Natural killer cell (primary cell): ENCODE measurements at regions of chr11 and their contacts with region 1.

Region 1: DNA sequence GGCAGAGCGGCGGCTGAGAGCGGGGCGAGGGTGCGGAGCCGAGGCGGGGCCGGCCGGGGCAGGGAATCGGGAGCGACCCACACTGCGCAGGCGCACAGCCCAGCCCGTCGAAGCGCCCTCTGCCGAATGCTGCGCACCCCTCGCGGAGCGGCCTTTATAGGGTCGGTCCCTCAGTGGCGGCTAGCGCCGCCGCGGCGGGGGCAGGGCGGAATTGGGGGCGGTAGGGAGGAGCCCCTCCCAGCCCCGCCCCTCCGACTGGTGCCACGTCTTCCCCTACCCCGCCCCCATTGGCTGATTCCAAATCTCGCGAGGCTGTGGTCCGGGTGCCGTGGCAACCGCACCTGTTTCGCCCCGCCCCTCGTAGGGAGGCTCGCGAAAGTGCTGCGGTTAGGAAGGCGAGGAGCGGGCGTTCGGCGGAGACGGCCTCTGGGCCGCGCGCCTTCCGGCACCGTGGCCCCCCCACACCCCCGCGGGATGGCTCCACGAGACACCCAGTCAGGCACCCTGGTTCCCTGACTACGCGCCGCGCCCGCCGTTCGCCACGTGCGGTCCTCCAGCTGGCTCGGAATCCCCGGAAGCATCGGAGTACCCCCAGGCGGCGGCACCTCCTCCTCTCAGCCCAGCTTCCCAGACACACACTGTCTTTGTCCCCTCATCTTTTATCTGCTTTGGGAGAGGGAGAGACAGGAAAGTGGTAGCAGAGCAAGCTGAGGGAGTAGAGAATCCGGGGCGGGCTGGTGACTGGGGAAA is at the start of gene EHD1:
- DNase-seq: peak; percentile 99 to 100
- ATAC-seq: peak; percentile 82 to 94 (median 83)
- H3K4me3 ChIP-seq: peak within 1 kb of the TSS; percentile 73
- H3K4me3 Mint-ChIP-seq: peak within 1 kb of the TSS; percentile 98
- H3K27ac ChIP-seq: peak within 1 kb of the TSS; percentile 96
- H3K27ac Mint-ChIP-seq: peak within 1 kb of the TSS; percentile 95
- H3K4me1 ChIP-seq: peaks cover 67% of the 10 kb centered on the region
- H3K4me1 Mint-ChIP-seq: peaks cover 52 to 69% of the 10 kb centered on the region in 2 donors
- H3K27me3 ChIP-seq: no peaks in the 10 kb centered on the region
- H3K27me3 Mint-ChIP-seq: no peaks in the 10 kb centered on the region
- CTCF ChIP-seq: peak; percentile 28
- total RNA-seq, gene EHD1: 218 to 246 (median 225) TPM

Region 2: DNA sequence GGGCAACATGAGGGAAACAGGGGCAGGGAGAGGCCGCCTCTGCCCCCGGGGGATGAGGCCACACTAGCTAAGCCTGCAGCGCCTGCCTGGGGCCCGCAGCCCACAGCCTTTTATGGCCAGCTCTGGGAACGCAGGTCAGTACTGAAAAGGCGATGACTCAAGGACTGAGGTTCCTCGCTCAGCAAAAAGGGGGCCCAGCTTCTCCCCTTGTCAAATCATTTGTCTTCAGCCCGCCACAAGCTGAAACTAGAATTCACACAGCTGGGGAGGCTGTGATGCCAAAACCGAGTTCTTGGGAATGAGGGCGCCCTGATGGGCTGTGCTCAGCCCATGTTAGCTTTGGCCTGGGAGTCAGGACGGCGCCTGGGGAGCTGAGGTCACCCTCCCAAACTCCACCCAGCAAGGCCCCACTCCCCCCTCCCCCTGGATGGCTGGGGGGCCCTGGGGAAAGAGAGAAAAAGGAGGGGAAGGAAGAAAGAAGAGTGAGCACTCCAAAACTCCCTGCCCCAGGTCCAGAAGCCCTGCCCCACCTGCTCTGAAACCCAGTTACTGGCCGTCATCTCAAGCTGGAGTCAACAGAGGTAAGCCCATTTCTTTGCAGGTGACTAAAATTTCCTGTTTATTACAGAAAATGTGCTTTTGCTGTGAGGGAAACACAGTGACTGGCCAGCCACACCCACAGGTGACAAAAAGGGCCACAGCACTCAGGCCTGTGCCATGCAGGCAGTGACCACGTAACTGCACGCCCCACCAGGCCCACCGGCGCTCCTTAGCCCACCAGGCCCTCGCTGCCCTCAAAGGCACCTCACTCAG is 14.0 kb before region 1 on chr11:
- intact Hi-C with region 1: loop called (anchors 1 kb)
- DNase-seq: peak in 1 of 2 donors; percentile 50
- ATAC-seq: peak; percentile 25 to 50 (median 25)
- H3K4me3 ChIP-seq: peak overlapping the region; percentile 10
- H3K4me3 Mint-ChIP-seq: peak overlapping the region; percentile 81
- H3K27ac ChIP-seq: peak overlapping the region; percentile 91
- H3K27ac Mint-ChIP-seq: peak overlapping the region; percentile 95 to 96
- H3K4me1 ChIP-seq: peaks cover 99% of the 10 kb centered on the region
- H3K4me1 Mint-ChIP-seq: peaks cover 65 to 85% of the 10 kb centered on the region in 2 donors
- H3K27me3 ChIP-seq: no peaks in the 10 kb centered on the region
- H3K27me3 Mint-ChIP-seq: no peaks in the 10 kb centered on the region
- CTCF ChIP-seq: no peak

Region 3: DNA sequence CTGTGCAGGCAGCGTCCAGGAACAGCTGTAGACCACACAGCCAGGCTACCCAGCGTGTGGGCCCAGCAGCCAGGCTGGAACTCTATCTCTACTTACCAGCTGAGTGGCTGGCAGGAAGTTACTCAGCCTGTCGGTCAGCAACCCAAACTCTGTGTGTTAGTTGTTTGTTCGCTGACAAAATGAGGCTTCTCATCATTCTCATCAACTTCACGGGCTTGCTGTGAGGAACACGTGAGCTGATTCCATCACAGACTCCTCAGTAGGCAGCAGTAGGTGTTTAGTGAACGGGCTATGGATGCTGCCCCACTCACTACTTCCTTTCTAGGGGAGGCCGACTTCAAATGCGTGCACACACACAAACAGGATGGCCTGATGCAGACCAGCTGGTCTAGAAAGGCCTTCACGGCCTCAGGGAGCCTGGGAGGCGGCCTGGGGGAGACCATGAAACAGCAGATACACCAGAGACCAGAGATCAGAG is 290.5 kb after region 1 on chr11:
- intact Hi-C with region 1: no loop called
- DNase-seq: no peak
- ATAC-seq: peak; percentile 84 to 91 (median 87)
- H3K4me3 ChIP-seq: no peak overlapping the region
- H3K4me3 Mint-ChIP-seq: peak overlapping the region; percentile 83
- H3K27ac ChIP-seq: peak overlapping the region; percentile 95
- H3K27ac Mint-ChIP-seq: peak overlapping the region; percentile 97 to 98
- H3K4me1 ChIP-seq: peaks cover 16% of the 10 kb centered on the region
- H3K4me1 Mint-ChIP-seq: peaks cover 11 to 15% of the 10 kb centered on the region in 2 donors
- H3K27me3 ChIP-seq: no peaks in the 10 kb centered on the region
- H3K27me3 Mint-ChIP-seq: no peaks in the 10 kb centered on the region
- CTCF ChIP-seq: no peak